ENCODE measurements at regions of chr6 and their contacts with region 1.

Region 1: GRCh38 chr6:30836431-30836866 is 47.9 kb upstream of the DDR1 start:
- DNase-seq: peak in 1 of 2 donors; percentile 82
- H3K4me3 ChIP-seq: no peak overlapping the region
- H3K27ac ChIP-seq: peak overlapping the region; percentile 27 to 64
- H3K4me1 ChIP-seq: peaks cover 0 to 11% of the 10 kb centered on the region in 2 donors
- H3K27me3 ChIP-seq: no peaks in the 10 kb centered on the region
- CTCF ChIP-seq: no peak

Region 2: DNA sequence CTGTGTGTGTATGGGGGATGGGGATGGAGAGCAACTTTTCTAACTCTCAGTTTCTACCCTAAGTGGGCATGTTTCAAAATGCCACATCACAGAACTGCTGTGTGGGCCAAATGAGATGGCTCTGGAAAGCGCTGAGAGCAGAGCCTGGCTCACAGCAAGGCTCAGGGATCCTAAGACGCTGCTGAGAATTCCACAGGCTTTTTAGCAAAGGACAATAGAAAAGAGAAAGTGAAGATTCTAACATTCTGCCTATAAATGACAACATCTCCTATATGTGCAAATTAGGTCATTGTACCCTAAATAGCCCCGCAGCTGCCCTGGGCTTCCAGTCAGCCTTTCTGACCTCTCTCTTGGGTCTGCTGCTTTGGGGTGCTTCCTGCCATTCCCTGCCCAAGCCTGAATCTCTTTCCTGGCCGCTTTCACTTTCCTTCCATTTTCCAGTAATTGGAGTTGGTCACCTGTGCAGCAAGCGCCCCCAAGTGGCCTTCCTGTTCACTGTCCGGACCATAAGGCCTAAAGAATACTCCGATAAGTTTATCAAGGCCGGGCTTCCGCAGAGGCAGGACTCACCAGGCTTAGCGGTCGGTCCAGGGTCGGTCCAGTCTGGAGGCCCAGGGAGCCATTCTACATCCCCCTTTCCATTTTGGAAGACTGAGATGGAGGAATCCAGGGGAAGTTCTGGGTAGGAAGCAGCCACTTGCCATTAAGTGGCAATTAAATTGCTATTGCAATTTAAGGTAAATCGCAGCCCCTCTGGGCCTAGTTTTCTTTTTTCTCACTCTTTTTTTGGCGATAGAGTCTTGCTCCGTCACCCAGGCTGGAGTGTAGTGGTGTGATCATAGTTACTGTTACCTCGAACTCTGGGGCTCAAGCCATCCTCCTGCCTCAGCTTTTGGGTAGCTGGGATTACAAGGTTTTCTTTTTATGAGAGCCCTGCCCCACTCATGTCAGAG is 41.2 kb after region 1 on chr6:
- intact Hi-C with region 1: loop called (anchors 2 kb)
- DNase-seq: peak; percentile 67 to 97
- H3K4me3 ChIP-seq: peak overlapping the region; percentile 45 to 57
- H3K27ac ChIP-seq: peak overlapping the region; percentile 81 to 87
- H3K4me1 ChIP-seq: peaks cover 0 to 11% of the 10 kb centered on the region in 2 donors
- H3K27me3 ChIP-seq: no peaks in the 10 kb centered on the region
- CTCF ChIP-seq: peak; percentile 86 to 90 (median 89)

Measured in ascending aorta (tissue), 2 donors.